ENCODE measurements at regions of chr21 and their contacts with region 1.

Region 1: DNA sequence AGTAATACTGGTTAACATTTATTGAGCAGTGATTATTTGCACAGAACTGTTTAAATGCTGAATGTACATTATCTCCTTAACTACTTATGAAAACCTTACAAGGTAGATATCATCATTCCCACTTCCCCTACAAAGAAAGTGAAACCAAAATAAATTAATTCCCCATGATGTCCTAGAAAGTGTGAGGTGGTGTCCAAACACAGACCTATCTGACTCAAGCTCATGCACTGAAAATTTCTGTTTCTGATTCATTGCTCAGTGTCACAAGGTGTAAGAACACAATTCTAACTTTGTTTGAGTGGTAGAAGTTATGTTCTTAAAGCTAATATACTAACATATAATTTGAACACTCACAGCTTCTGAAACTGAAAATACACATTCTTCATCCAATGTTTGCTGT is 178.7 kb downstream of the MRPL39 start:
- DNase-seq: no peak
- ATAC-seq: peak; percentile 15
- H3K4me3 Mint-ChIP-seq: peak overlapping the region; percentile 35
- H3K27ac Mint-ChIP-seq: peak overlapping the region; percentile 65
- H3K4me1 Mint-ChIP-seq: peaks cover 53% of the 10 kb centered on the region
- H3K27me3 Mint-ChIP-seq: no peaks in the 10 kb centered on the region
- CTCF ChIP-seq: no peak

Region 2: DNA sequence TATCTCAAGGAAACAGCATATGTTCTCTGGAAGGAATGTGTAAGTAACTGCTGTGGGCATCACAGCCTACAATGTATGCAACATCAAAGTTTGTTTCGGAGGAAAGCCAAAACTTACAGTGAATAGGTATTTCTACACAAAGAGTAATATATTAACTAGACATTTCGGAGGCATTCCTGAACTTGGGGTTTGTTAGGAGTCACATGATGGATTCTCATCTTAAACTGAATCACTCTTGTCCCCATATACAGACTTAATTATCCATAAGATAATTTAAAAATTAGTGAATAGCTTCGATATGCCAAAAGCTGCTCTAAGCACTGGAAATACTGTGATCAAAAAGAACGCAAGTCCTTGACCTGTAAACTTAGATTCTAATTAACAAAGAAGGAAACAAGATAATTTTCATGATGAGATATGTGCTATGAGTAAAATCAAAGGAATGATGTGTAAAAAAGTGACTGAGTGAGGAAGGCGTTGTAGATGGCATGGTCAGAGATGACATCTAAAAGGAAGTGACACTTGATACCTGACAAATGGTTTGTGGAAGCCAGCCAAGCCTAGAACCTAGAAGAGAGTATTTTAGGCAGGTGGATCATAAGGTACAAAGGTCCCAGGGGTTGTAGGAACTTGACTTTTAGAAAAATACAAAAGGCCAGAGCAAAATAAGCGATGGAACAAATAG is 94.3 kb before region 1 on chr21:
- CTCF ChIA-PET with region 1: no interaction called
- POLR2A ChIA-PET with region 1: no interaction called
- intact Hi-C with region 1: no loop called
- DNase-seq: no peak
- ATAC-seq: no peak
- H3K4me3 Mint-ChIP-seq: no peak overlapping the region
- H3K27ac Mint-ChIP-seq: no peak overlapping the region
- H3K4me1 Mint-ChIP-seq: peaks cover 4% of the 10 kb centered on the region
- H3K27me3 Mint-ChIP-seq: no peaks in the 10 kb centered on the region
- CTCF ChIP-seq: no peak

Region 3: DNA sequence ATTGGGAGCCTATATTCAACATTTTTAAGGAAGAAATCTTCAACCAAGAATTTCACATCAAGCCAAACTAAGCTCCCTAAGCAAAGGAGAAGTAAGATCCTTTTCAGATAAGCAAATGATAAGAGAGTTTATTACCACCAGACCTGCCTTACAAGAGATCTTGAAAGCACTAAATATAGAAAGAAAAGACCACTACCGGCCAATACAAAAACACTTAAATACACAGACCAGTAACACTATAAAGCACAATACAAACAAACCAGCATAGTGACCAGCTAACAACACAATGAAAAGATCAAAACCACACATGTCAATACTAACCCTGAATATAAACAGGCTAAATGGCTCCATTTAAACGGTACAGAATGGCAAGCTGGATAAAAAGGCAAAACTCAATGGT is 13.3 kb after region 1 on chr21:
- CTCF ChIA-PET with region 1: interaction called, 3 read pairs
- POLR2A ChIA-PET with region 1: no interaction called
- intact Hi-C with region 1: loop called (anchors 2 kb)
- DNase-seq: no peak
- ATAC-seq: no peak
- H3K4me3 Mint-ChIP-seq: no peak overlapping the region
- H3K27ac Mint-ChIP-seq: no peak overlapping the region
- H3K4me1 Mint-ChIP-seq: peaks cover 4% of the 10 kb centered on the region
- H3K27me3 Mint-ChIP-seq: no peaks in the 10 kb centered on the region
- CTCF ChIP-seq: no peak

Region 4: GRCh38 chr21:25501996-25502665 is 73.6 kb after region 1 on chr21:
- CTCF ChIA-PET with region 1: no interaction called
- POLR2A ChIA-PET with region 1: interaction called, 5 read pairs
- intact Hi-C with region 1: loop called (anchors 2 kb)
- DNase-seq: no peak
- ATAC-seq: peak; percentile 83
- H3K4me3 Mint-ChIP-seq: peak overlapping the region; percentile 32
- H3K27ac Mint-ChIP-seq: peak overlapping the region; percentile 82
- H3K4me1 Mint-ChIP-seq: peaks cover 54% of the 10 kb centered on the region
- H3K27me3 Mint-ChIP-seq: no peaks in the 10 kb centered on the region
- CTCF ChIP-seq: no peak